SK-N-SH (cell line): ENCODE measurements at regions of chr17 and their contacts with region 1.

Region 1: GRCh38 chr17:63984651-63985386 is 12.1 kb upstream of the SCN4A start:
- DNase-seq: no peak
- H3K4me3 ChIP-seq: no peak overlapping the region
- H3K27ac ChIP-seq: no peak overlapping the region
- H3K4me1 ChIP-seq: peaks cover 0 to 4% of the 10 kb centered on the region in 2 experiments; a peak in 1 of 4 replicates
- H3K27me3 ChIP-seq: no peaks in the 10 kb centered on the region
- CTCF ChIP-seq: no peak
- EP300 ChIP-seq: no peak
- RAD21 ChIP-seq: no peak

Region 2: GRCh38 chr17:63974594-63975192 is 10.1 kb before region 1 on chr17:
- CTCF ChIA-PET with region 1: interaction called, 56 read pairs
- POLR2A ChIA-PET with region 1: interaction called, 3 read pairs
- DNase-seq: no peak
- H3K4me3 ChIP-seq: peak overlapping the region in 1 of 2 experiments; percentile 0; a peak in 1 of 4 replicates
- H3K27ac ChIP-seq: peak overlapping the region in 1 of 2 experiments; percentile 16; a peak in 1 of 4 replicates
- H3K4me1 ChIP-seq: peaks cover 8 to 12% of the 10 kb centered on the region in 2 experiments; a peak in 3 of 4 replicates
- H3K27me3 ChIP-seq: no peaks in the 10 kb centered on the region
- CTCF ChIP-seq: no peak
- EP300 ChIP-seq: no peak
- RAD21 ChIP-seq: no peak

Region 3: DNA sequence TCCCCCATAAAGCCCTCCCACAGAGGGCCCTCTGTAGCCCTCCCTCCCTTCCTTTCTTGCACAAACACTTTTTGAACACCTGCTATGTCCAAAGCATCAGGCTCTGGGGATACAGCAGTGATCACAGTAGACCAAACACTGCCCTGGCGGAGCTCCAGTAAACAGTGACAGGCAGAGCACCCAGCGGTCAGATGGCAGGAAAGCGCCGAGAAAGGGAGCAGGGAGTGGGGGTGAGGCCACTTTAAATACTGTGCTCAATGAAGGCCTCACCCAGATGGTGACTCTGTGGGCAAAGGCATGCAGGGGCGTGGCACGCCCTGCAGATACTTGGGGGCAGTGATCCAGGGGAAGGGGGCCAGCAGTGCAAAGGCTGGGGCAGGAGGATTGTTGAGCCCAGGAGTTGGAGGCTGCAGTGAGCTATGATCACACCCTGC is 20.9 kb after region 1 on chr17:
- CTCF ChIA-PET with region 1: interaction called, 11 read pairs
- POLR2A ChIA-PET with region 1: no interaction called
- DNase-seq: peak; percentile 76
- H3K4me3 ChIP-seq: no peak overlapping the region
- H3K27ac ChIP-seq: peak overlapping the region in 1 of 2 experiments; percentile 53; a peak in 1 of 4 replicates
- H3K4me1 ChIP-seq: peaks cover 0 to 22% of the 10 kb centered on the region in 2 experiments; a peak in 1 of 4 replicates
- H3K27me3 ChIP-seq: no peaks in the 10 kb centered on the region
- CTCF ChIP-seq: no peak
- EP300 ChIP-seq: no peak
- RAD21 ChIP-seq: no peak